SK-N-SH (cell line): ENCODE measurements at regions of chr13 and their contacts with region 1.

Region 1: GRCh38 chr13:35818633-35819067 is 312.5 kb downstream of the DCLK1 start:
- DNase-seq: peak; percentile 51
- H3K4me3 ChIP-seq: no peak overlapping the region; a peak in 1 of 4 replicates
- H3K27ac ChIP-seq: no peak overlapping the region
- H3K4me1 ChIP-seq: peaks cover 0 to 8% of the 10 kb centered on the region in 2 experiments; a peak in 1 of 4 replicates
- H3K27me3 ChIP-seq: no peaks in the 10 kb centered on the region
- CTCF ChIP-seq: peak; percentile 85
- EP300 ChIP-seq: no peak
- RAD21 ChIP-seq: peak; percentile 85

Region 2: GRCh38 chr13:35830850-35831450 is 12.3 kb after region 1 on chr13:
- CTCF ChIA-PET with region 1: interaction called, 11 read pairs
- POLR2A ChIA-PET with region 1: no interaction called
- DNase-seq: no peak
- H3K4me3 ChIP-seq: no peak overlapping the region
- H3K27ac ChIP-seq: no peak overlapping the region
- H3K4me1 ChIP-seq: no peaks in the 10 kb centered on the region; a peak in 1 of 4 replicates
- H3K27me3 ChIP-seq: no peaks in the 10 kb centered on the region
- CTCF ChIP-seq: no peak
- EP300 ChIP-seq: no peak
- RAD21 ChIP-seq: no peak

Region 3: DNA sequence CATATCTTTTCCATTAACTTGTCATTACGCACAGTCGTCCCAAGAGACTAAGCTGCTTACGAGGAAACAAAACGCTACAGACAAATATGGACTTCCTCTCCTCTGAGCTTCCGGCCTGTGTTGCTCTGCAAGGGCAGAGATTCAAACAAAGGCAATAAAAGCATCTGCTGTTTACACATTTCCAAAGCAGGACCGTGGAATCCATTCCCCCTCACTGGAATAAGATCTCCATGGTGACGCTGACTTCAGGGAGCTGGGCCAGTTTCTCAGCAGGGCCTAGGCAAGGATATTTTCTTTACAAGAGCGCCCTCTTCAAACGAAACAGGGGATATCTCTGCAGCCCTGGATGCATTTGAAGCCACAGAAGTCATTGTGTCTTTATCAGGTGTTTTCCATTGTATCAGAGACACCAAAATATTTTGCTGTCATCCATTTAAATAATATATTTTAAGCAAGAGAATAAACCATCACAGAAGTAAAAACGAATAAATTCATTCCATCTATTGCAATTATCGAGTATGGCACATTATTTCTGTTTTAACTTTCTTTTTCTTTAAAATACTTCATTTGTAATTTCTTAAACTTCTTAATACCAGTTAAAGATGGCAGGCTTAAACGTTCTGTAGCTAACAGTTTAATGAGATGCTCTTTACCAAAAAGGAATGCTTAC is 135.0 kb after region 1 on chr13:
- CTCF ChIA-PET with region 1: interaction called, 29 read pairs
- POLR2A ChIA-PET with region 1: no interaction called
- DNase-seq: peak; percentile 74
- H3K4me3 ChIP-seq: peak overlapping the region; percentile 32 to 42
- H3K27ac ChIP-seq: peak overlapping the region; percentile 43 to 83; a peak in 3 of 4 replicates
- H3K4me1 ChIP-seq: peaks cover 0 to 7% of the 10 kb centered on the region in 2 experiments; a peak in 3 of 4 replicates
- H3K27me3 ChIP-seq: no peaks in the 10 kb centered on the region
- CTCF ChIP-seq: peak; percentile 90
- EP300 ChIP-seq: peak in 1 of 2 experiments; percentile 51; a peak in 2 of 4 replicates
- RAD21 ChIP-seq: peak; percentile 95

Region 4: GRCh38 chr13:36224730-36225129 is 406.1 kb after region 1 on chr13:
- CTCF ChIA-PET with region 1: no interaction called
- POLR2A ChIA-PET with region 1: no interaction called
- DNase-seq: no peak
- H3K4me3 ChIP-seq: no peak overlapping the region
- H3K27ac ChIP-seq: no peak overlapping the region
- H3K4me1 ChIP-seq: no peaks in the 10 kb centered on the region
- H3K27me3 ChIP-seq: no peaks in the 10 kb centered on the region
- CTCF ChIP-seq: no peak
- EP300 ChIP-seq: no peak
- RAD21 ChIP-seq: no peak